ENCODE measurements at regions of chr3 and their contacts with region 1.

Region 1: DNA sequence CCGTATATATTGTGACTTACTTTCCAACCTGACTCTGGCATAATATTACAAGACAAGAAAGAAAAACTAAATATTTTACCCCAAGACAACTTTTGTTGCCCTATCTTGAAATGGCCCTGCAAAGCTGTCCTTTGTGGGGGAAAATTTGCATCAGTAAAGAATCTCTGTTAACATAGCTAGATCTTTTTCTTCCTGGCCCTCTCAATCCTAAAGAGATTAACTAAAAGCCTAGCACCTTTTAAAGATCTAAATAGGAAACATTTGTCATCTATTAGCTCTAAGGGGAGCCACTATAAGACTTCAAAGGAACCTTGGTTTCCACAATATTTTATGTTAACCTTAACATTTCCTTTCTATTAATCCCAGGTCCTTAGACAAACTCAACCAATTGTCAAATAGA is 199.0 kb upstream of the SLITRK3 start:
- DNase-seq: no peak
- H3K4me3 Mint-ChIP-seq: no peak overlapping the region
- H3K27ac Mint-ChIP-seq: no peak overlapping the region
- H3K4me1 Mint-ChIP-seq: no peaks in the 10 kb centered on the region
- H3K27me3 Mint-ChIP-seq: no peaks in the 10 kb centered on the region
- CTCF ChIP-seq: no peak

Region 2: DNA sequence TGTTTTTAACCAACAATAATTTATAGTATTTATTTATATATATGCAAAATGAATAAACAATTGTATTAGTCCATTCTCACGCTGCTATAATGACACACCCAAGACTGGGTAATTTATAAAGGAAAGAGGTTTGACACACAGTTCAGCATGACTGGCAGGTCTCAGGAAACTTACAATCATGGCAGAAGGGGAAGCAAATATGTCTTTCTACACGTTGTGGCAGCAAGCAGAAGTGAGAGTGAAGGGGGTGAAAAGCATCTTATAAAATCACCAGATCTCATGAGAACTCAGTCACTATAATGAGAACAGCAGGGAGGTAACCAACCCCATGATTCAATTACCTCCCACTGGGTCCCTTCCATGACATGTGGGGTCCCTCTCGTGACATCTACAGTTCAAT is 36.2 kb before region 1 on chr3:
- CTCF ChIA-PET with region 1: no interaction called
- intact Hi-C with region 1: loop called (anchors 2 kb)
- DNase-seq: no peak
- H3K4me3 Mint-ChIP-seq: no peak overlapping the region
- H3K27ac Mint-ChIP-seq: no peak overlapping the region
- H3K4me1 Mint-ChIP-seq: no peaks in the 10 kb centered on the region
- H3K27me3 Mint-ChIP-seq: no peaks in the 10 kb centered on the region
- CTCF ChIP-seq: no peak

Measured in Calu3 (cell line).